ENCODE measurements at regions of chrX and their contacts with region 1.

Region 1: DNA sequence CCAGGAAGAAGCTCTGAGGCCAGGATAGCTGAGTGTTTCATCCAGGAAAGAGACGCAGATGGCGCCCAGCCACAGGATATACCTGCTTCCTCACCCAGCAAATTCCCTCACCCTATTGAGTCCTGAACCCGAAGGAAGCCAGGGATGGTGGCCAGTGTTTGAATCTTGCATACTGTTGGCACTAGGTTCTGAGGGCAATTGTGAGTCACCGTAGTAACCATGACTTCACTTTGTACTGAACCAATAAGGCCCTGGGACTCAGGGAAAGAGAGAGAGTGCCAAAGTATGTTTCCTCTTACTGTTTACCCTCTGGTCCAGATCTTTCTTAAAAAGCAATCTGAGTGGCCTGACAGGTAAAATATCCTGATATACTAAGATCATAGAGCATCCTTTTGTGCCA is 25.6 kb upstream of the SMIM10L2A start:
- DNase-seq: peak; percentile 13
- ATAC-seq: no peak

Region 2: GRCh38 chrX:135264211-135264610 is 131.9 kb before region 1 on chrX:
- intact Hi-C with region 1: loop called (anchors 5 kb)
- DNase-seq: no peak
- ATAC-seq: no peak